Right ventricle myocardium superior (tissue), 1 donor: ENCODE measurements at regions of chr1 and their contacts with region 1.

Region 1: DNA sequence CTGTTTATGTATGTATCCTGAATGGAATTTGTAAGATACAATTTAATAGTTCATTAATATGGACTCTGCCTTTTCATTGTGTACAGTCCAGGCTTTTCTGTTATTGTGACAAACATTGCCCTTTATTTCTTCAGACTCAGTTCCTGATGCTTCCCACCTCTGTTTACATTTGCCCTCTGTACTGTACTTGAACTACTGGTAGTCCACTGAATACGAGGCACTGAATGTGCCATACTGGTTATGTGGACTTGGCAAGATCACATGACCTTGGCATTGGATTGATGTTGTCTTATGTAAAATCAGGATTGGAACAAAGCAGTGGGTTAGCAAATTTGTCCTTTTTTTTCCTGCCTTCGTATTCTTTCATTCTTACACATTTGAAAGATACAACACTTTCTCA is 27.8 kb downstream of the RALGPS2 start:
- DNase-seq: no peak
- ATAC-seq: no peak

Region 2: GRCh38 chr1:178487070-178487615 is 265.7 kb before region 1 on chr1:
- intact Hi-C with region 1: no loop called
- DNase-seq: no peak
- ATAC-seq: peak; percentile 44

Region 3: GRCh38 chr1:178542560-178543356 is 210.1 kb before region 1 on chr1:
- intact Hi-C with region 1: loop called (anchors 2 kb)
- DNase-seq: peak; percentile 93
- ATAC-seq: peak; percentile 93